ENCODE measurements at regions of chr22 and their contacts with region 1.

Region 1: DNA sequence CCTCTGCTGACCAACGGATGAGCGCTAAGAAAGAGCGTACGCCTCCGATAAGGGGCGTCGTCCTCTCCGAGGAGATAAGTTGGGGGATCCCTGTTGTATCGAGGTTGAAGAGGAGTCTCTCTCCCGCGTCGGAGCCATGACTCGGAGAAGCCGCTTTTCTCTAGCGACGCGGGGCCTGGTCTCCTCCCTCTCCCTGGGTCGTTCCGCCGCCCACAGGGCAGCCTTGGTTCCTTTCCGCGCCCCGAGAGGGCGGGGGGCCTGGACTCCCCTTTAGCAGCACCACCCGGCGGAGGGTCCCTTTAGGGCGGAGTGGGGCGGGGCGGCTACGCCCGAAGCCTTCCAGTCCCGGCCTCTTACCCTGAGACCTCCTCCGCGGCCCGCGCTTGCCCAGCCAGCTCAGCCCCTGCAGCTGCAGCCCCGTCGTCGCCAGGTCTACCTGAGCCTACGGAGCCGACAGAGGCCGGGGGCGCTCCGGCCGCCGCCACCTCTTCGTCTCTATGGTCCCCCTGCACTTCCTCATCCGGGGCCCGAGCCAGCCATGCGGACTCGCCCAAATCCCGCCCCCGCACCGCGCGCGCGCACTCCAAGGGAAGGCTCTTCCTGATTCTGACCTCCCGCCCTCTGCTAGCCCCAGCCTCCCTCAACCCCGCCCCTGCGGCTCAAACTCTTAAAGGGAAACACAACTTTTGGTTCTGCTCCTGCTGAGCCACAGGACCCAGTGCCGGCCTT is at the start of gene PRR14L:
- DNase-seq: peak; percentile 95
- H3K4me3 ChIP-seq: peak within 1 kb of the TSS; percentile 70 to 84 (median 72)
- H3K27ac ChIP-seq: peak within 1 kb of the TSS; percentile 73
- H3K4me1 ChIP-seq: peaks cover 23% of the 10 kb centered on the region
- H3K27me3 ChIP-seq: no peaks in the 10 kb centered on the region
- CTCF ChIP-seq: peak in 1 of 2 donors; percentile 3
- total RNA-seq, gene PRR14L: 28.7 to 39.3 TPM

Region 2: GRCh38 chr22:31561238-31561887 is 188.4 kb before region 1 on chr22:
- CTCF ChIA-PET with region 1: no interaction called
- dilution Hi-C with region 1: no loop called
- in situ Hi-C with region 1: no loop called
- intact Hi-C with region 1: loop called (anchors 5 kb)
- DNase-seq: peak; percentile 70
- H3K4me3 ChIP-seq: no peak overlapping the region
- H3K27ac ChIP-seq: no peak overlapping the region
- H3K4me1 ChIP-seq: no peaks in the 10 kb centered on the region
- H3K27me3 ChIP-seq: no peaks in the 10 kb centered on the region
- CTCF ChIP-seq: peak; percentile 76 to 94

Region 3: GRCh38 chr22:31707519-31707918 is 42.3 kb before region 1 on chr22:
- CTCF ChIA-PET with region 1: interaction called, 4 read pairs
- dilution Hi-C with region 1: loop called (anchors 10 kb)
- in situ Hi-C with region 1: no loop called
- intact Hi-C with region 1: no loop called
- DNase-seq: no peak
- H3K4me3 ChIP-seq: no peak overlapping the region
- H3K27ac ChIP-seq: no peak overlapping the region
- H3K4me1 ChIP-seq: no peaks in the 10 kb centered on the region
- H3K27me3 ChIP-seq: no peaks in the 10 kb centered on the region
- CTCF ChIP-seq: no peak

Region 4: GRCh38 chr22:31818481-31819392 is 68.9 kb after region 1 on chr22:
- CTCF ChIA-PET with region 1: no interaction called
- dilution Hi-C with region 1: loop called (anchors 10 kb)
- in situ Hi-C with region 1: no loop called
- intact Hi-C with region 1: no loop called
- DNase-seq: peak; percentile 63
- H3K4me3 ChIP-seq: no peak overlapping the region
- H3K27ac ChIP-seq: no peak overlapping the region
- H3K4me1 ChIP-seq: no peaks in the 10 kb centered on the region
- H3K27me3 ChIP-seq: no peaks in the 10 kb centered on the region
- CTCF ChIP-seq: no peak

Region 5: DNA sequence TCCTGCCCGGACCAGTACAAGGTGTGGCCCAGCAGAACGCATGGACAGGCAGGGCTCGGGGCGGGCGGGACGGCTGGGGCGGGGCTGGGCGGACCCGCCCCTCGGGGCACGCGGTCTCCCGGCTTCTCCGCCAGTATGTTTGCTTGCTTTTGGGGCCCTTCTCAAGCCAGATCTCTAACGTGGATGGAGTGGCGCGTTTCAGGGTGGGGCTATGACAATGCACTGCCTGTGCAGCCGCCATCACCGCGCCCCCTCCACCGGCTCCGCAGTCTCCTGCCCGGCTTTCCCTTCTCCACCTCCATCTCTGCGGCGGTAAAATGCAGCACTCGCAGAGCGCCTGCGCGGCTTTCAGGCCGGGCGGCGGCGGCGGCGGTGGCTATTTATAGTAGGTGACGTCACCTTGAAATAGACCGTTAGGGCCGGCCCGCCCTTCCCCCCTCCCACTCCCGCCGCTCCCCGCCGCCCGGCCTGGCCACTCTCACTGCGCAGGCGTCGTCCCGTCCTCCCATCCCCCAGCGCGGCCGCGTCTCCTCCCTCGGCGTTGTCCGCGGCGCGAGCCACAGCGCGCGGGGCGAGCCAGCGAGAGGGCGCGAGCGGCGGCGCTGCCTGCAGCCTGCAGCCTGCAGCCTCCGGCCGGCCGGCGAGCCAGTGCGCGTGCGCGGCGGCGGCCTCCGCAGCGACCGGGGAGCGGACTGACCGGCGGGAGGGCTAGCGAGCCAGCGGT is 194.3 kb after region 1 on chr22 and contains the start of gene YWHAH:
- CTCF ChIA-PET with region 1: no interaction called
- dilution Hi-C with region 1: no loop called
- in situ Hi-C with region 1: no loop called
- intact Hi-C with region 1: loop called (anchors 2 kb)
- DNase-seq: peak; percentile 91
- H3K4me3 ChIP-seq: peak within 1 kb of the TSS; percentile 81 to 92 (median 91)
- H3K27ac ChIP-seq: peak within 1 kb of the TSS; percentile 86
- H3K4me1 ChIP-seq: peaks cover 21% of the 10 kb centered on the region
- H3K27me3 ChIP-seq: no peaks in the 10 kb centered on the region
- CTCF ChIP-seq: no peak
- total RNA-seq, gene YWHAH: 153 to 166 TPM

Measured in mammary epithelial cell (primary cell).